Activated CD8-positive, alpha-beta T cell treated with anti-CD3 and anti-CD28 coated beads, Interleukin-2, amount 10 ng/mL, durations not matched to agents 7 days and 5 days (primary cell): ENCODE measurements at regions of chr12 and their contacts with region 1.

Region 1: DNA sequence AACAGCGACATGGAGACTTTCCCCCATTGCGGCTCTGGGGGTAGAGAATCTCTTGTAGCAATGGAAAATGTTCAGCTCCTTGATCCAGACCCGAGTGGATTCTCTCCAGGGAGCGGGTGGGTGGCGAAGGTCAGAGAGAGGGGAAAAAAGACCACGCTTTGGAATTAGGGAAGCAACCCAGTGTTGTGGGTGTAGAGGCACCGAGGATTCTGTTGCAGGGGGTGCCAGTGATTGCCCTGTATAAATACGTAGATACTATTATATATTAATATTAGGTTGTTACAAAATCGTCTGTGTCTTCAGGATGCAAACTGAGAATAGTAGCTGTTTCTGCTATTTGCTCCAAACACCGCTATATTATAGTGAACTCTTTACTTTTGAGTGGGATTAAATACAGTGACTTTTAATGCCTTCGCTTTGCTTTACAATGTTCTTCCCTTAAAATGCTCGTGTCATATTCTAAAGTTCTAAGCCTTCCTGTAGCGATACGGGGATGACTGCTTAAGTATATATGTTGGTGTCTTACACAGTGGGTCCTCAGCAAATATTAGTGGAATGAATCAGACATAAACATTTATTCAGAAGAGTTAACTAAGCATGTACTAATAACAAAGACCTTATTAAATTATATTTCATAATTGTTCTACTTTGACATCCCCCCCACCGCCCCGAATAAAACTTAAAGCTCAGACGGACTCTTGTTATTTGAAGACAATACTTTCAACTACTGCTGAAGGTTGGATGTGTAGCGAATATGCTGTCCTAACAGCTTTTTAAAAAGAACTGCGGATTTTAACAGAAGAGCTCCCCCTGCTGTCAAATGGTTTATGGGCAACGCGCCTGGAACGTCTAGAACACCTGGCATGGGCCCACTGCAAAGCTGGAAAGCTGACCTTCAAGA is 136.4 kb upstream of the KRAS start:
- DNase-seq: peak; percentile 90
- ATAC-seq: peak; percentile 20
- H3K4me3 Mint-ChIP-seq: peak overlapping the region; percentile 90
- H3K27ac Mint-ChIP-seq: peak overlapping the region; percentile 99
- H3K4me1 Mint-ChIP-seq: peaks cover 56% of the 10 kb centered on the region
- H3K27me3 Mint-ChIP-seq: no peaks in the 10 kb centered on the region

Region 2: GRCh38 chr12:25195056-25195971 is 191.8 kb before region 1 on chr12 and contains the starts of genes DNAI7 and ETFRF1:
- CTCF ChIA-PET with region 1: interaction called, 12 read pairs
- POLR2A ChIA-PET with region 1: interaction called, 3 read pairs
- DNase-seq: peak; percentile 98
- ATAC-seq: peak; percentile 95
- H3K4me3 Mint-ChIP-seq: peak within 1 kb of the TSS; percentile 93
- H3K27ac Mint-ChIP-seq: peak within 1 kb of the TSS; percentile 88
- H3K4me1 Mint-ChIP-seq: peaks cover 19% of the 10 kb centered on the region
- H3K27me3 Mint-ChIP-seq: no peaks in the 10 kb centered on the region
- total RNA-seq, gene DNAI7: 0.16 TPM in 1 of 2 experiments, not detected in the other
- total RNA-seq, gene ETFRF1: 8.9 to 9.7 TPM

Region 3: GRCh38 chr12:25208554-25208953 is 178.5 kb before region 1 on chr12:
- CTCF ChIA-PET with region 1: interaction called, 11 read pairs
- POLR2A ChIA-PET with region 1: interaction called, 4 read pairs
- DNase-seq: no peak
- ATAC-seq: no peak
- H3K4me3 Mint-ChIP-seq: no peak overlapping the region
- H3K27ac Mint-ChIP-seq: no peak overlapping the region
- H3K4me1 Mint-ChIP-seq: no peaks in the 10 kb centered on the region
- H3K27me3 Mint-ChIP-seq: no peaks in the 10 kb centered on the region

Region 4: DNA sequence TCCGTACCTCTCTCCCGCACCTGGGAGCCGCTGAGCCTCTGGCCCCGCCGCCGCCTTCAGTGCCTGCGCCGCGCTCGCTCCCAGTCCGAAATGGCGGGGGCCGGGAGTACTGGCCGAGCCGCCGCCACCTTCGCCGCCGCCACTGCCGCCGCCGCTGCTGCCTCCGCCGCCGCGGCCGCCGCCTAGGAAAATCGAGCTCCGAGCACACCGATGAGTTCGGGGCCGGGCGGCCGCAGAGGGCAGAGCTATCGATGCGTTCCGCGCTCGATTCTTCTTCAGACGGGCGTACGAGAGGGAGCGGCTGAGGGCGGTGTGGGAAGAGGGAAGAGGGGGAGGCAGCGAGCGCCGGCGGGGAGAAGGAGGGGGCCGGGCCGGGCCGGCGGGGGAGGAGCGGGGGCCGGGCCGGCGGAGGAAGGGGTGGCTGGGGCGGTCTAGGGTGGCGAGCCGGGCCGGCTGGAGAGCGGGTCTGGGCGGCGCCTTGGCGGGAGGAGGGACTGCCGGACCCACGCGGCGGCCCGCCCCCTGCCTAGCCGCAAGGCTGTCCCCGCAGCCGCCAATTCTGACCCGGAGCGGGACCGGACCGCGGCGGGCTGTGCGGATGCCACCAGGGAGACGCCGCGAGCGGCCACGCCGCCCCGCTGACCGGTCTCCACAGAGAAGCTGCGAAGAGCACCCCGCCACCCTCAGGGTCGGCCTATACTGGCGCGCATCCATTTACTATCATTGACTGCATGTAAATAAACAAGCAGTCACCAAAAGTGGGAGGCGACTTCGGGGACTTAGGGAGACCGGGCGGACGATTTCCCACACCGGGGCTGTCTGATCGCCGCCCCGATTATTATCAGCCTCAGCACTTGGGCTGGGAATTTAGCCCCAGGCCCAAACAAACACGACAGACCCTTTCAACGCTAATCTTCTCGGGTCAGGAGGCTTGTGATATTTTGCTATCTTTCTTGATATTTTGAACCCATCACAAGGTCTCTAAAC is 136.0 kb before region 1 on chr12 and contains the start of gene KRAS:
- CTCF ChIA-PET with region 1: interaction called, 13 read pairs
- POLR2A ChIA-PET with region 1: interaction called, 6 read pairs
- DNase-seq: peak; percentile 94
- ATAC-seq: peak; percentile 87
- H3K4me3 Mint-ChIP-seq: peak within 1 kb of the TSS; percentile 88
- H3K27ac Mint-ChIP-seq: peak within 1 kb of the TSS; percentile 92
- H3K4me1 Mint-ChIP-seq: peaks cover 23% of the 10 kb centered on the region
- H3K27me3 Mint-ChIP-seq: peaks cover 2% of the 10 kb centered on the region
- total RNA-seq, gene KRAS: 33.4 to 37.6 TPM

Region 5: GRCh38 chr12:25332143-25332542 is 54.9 kb before region 1 on chr12:
- CTCF ChIA-PET with region 1: interaction called, 10 read pairs
- POLR2A ChIA-PET with region 1: no interaction called
- DNase-seq: no peak
- ATAC-seq: peak; percentile 42
- H3K4me3 Mint-ChIP-seq: no peak overlapping the region
- H3K27ac Mint-ChIP-seq: no peak overlapping the region
- H3K4me1 Mint-ChIP-seq: peaks cover 6% of the 10 kb centered on the region
- H3K27me3 Mint-ChIP-seq: no peaks in the 10 kb centered on the region

Region 6: DNA sequence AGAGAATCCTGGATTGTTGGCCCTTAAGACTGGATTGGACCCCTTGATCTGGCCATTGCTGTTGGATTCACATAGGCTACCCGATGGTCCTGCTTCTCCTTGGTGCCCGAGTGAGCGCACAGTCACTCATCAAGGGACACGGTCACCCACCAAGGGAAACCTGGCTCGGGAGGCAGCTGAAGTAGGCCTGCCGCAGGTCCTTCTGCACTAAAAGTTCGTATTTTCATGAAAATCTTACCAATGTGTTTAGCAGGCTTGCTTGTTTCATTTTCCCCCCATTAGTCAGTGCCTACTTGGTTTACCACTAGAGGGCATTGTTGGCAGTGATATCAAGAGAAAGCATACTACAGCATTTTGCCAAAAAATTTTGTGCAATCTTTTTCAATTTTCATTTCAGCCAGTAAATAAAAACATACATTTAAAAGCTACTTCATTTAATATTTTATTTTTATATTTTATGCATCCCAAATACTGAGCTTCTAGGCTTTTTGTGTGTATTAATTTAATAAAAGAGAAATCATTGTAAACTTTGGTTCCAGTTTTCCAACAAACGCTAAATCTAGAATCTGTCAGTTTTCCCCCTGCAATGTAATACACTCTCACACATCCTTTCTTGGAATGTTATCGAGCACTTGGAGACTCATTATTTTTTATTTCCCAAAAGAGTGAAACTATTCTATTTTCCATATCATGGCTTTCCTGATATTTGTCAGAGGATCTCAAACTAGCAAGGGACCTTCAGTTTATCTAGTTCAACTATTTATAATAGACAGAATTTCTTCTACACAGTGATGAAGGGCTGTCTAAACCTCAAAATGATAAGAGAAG is 49.3 kb after region 1 on chr12:
- CTCF ChIA-PET with region 1: interaction called, 17 read pairs
- POLR2A ChIA-PET with region 1: no interaction called
- DNase-seq: peak; percentile 62
- ATAC-seq: peak; percentile 78
- H3K4me3 Mint-ChIP-seq: peak overlapping the region; percentile 51
- H3K27ac Mint-ChIP-seq: peak overlapping the region; percentile 33
- H3K4me1 Mint-ChIP-seq: peaks cover 11% of the 10 kb centered on the region
- H3K27me3 Mint-ChIP-seq: no peaks in the 10 kb centered on the region

Region 7: GRCh38 chr12:25447046-25447445 is 60.0 kb after region 1 on chr12:
- CTCF ChIA-PET with region 1: no interaction called
- POLR2A ChIA-PET with region 1: no interaction called
- DNase-seq: no peak
- ATAC-seq: no peak
- H3K4me3 Mint-ChIP-seq: no peak overlapping the region
- H3K27ac Mint-ChIP-seq: no peak overlapping the region
- H3K4me1 Mint-ChIP-seq: no peaks in the 10 kb centered on the region
- H3K27me3 Mint-ChIP-seq: peaks cover 16% of the 10 kb centered on the region

Region 8: DNA sequence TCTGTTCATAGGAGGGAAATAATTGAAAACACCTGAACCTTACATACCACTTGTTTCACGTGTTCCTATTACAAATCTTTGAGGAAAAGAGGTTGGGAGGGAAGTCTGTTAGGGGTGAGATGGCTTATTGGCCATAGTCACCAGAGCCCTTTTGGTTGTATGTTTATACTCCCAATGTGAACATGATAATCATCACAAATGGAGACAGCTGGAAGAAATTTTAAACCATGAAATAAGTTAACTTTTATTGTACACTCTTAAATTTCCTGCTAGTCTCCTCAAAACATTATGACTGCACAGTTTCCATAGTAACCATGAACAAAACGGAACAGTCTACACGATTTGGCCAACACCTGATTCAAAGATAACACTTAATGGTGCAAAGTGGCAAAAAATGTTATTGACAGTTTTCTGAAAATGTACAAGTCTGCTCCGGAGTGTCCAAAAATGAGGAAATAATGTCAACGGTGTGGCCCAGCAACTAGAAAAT is 109.1 kb after region 1 on chr12:
- CTCF ChIA-PET with region 1: no interaction called
- POLR2A ChIA-PET with region 1: no interaction called
- DNase-seq: no peak
- ATAC-seq: no peak
- H3K4me3 Mint-ChIP-seq: no peak overlapping the region
- H3K27ac Mint-ChIP-seq: no peak overlapping the region
- H3K4me1 Mint-ChIP-seq: no peaks in the 10 kb centered on the region
- H3K27me3 Mint-ChIP-seq: peaks cover 2% of the 10 kb centered on the region

Region 9: GRCh38 chr12:25855716-25856115 is 468.6 kb after region 1 on chr12:
- CTCF ChIA-PET with region 1: no interaction called
- POLR2A ChIA-PET with region 1: no interaction called
- DNase-seq: no peak
- ATAC-seq: no peak
- H3K4me3 Mint-ChIP-seq: no peak overlapping the region
- H3K27ac Mint-ChIP-seq: no peak overlapping the region
- H3K4me1 Mint-ChIP-seq: peaks cover 9% of the 10 kb centered on the region
- H3K27me3 Mint-ChIP-seq: peaks cover 9% of the 10 kb centered on the region